A673 (cell line): ENCODE measurements at regions of chr14 and their contacts with region 1.

Region 1: GRCh38 chr14:61252369-61253063 is 28.6 kb downstream of the TMEM30B start:
- DNase-seq: peak; percentile 93
- H3K4me3 ChIP-seq: no peak overlapping the region
- H3K27ac ChIP-seq: peak overlapping the region; percentile 26
- H3K4me1 ChIP-seq: peaks cover 14% of the 10 kb centered on the region
- H3K27me3 ChIP-seq: no peaks in the 10 kb centered on the region
- CTCF ChIP-seq: peak; percentile 95

Region 2: DNA sequence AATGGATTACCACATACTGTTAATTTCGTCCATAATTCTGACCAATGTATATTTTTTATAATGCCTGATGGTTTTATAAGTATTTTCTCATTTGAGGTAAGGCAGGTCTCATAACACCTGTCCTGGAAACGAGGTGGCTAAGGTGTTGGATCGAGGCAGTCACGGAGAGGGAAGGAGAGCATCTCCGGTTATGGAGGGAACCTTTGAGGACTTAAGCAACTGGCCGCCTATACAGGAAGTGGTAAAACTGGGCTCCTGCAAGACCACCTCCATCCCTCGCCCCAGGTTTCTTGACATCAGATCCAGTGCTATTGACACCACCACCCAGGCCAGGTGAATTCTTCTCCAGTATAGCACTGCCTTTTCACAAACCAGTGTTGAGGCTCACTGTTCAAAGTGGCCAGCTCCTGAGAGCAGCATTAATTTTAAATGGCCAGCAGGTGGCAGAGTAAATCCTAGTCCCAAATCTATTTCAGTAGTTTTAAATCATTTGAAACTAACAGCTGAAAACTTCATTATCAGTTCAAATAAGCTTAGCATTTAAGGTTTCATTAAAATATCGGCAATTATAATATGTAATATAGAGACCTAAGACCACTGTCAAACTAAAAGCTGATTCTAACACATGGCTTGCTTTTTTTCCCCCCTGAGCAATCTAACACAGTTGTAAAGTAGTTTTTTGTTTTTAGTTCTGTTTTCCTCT is 902.7 kb before region 1 on chr14:
- CTCF ChIA-PET with region 1: no interaction called
- POLR2A ChIA-PET with region 1: no interaction called
- intact Hi-C with region 1: loop called (anchors 10 kb)
- DNase-seq: peak; percentile 61
- H3K4me3 ChIP-seq: no peak overlapping the region
- H3K27ac ChIP-seq: no peak overlapping the region
- H3K4me1 ChIP-seq: no peaks in the 10 kb centered on the region
- H3K27me3 ChIP-seq: no peaks in the 10 kb centered on the region
- CTCF ChIP-seq: peak; percentile 78

Region 3: GRCh38 chr14:60724137-60724619 is 528.3 kb before region 1 on chr14 and contains the start of gene SIX4:
- CTCF ChIA-PET with region 1: no interaction called
- POLR2A ChIA-PET with region 1: no interaction called
- intact Hi-C with region 1: loop called (anchors 5 kb)
- DNase-seq: peak; percentile 84
- H3K4me3 ChIP-seq: peak within 1 kb of the TSS; percentile 84
- H3K27ac ChIP-seq: peak within 1 kb of the TSS; percentile 79
- H3K4me1 ChIP-seq: peaks cover 9% of the 10 kb centered on the region
- H3K27me3 ChIP-seq: no peaks in the 10 kb centered on the region
- CTCF ChIP-seq: no peak
- total RNA-seq, gene SIX4: 13.6 and 16.0 TPM in 2 replicates

Region 4: GRCh38 chr14:60980811-60981632 is 271.5 kb before region 1 on chr14 and contains the starts of genes SLC38A6 and TRMT5:
- CTCF ChIA-PET with region 1: no interaction called
- POLR2A ChIA-PET with region 1: no interaction called
- intact Hi-C with region 1: loop called (anchors 5 kb)
- DNase-seq: peak; percentile 97
- H3K4me3 ChIP-seq: peak within 1 kb of the TSS; percentile 84
- H3K27ac ChIP-seq: peak within 1 kb of the TSS; percentile 94
- H3K4me1 ChIP-seq: peaks cover 26% of the 10 kb centered on the region
- H3K27me3 ChIP-seq: no peaks in the 10 kb centered on the region
- CTCF ChIP-seq: no peak
- total RNA-seq, gene SLC38A6: 25.8 and 28.0 TPM in 2 replicates
- total RNA-seq, gene TRMT5: 21.9 and 26.2 TPM in 2 replicates

Region 5: GRCh38 chr14:61103481-61104339 is 148.8 kb before region 1 on chr14:
- CTCF ChIA-PET with region 1: no interaction called
- POLR2A ChIA-PET with region 1: no interaction called
- intact Hi-C with region 1: loop called (anchors 5 kb)
- DNase-seq: peak; percentile 98
- H3K4me3 ChIP-seq: no peak overlapping the region
- H3K27ac ChIP-seq: peak overlapping the region; percentile 96
- H3K4me1 ChIP-seq: peaks cover 74% of the 10 kb centered on the region
- H3K27me3 ChIP-seq: no peaks in the 10 kb centered on the region
- CTCF ChIP-seq: no peak

Region 6: DNA sequence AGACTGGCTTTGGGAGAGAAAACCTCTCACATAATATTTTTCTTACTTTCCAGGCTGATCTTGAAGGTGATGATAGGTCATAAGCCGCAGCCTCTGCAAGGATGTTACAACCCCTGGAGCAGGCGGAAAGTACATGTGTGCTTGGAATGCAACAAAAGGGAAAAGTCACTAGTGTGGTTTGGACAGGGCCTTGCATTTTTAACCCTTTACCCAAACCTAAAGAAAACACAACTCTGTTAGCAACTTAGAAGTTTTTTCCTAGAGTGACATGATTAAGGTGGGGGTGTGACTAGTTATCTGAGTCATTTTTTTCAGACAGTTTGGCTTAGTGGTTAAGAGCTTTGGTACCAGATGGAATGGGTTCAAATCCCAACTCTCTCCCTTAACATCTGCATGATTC is 68.4 kb before region 1 on chr14:
- CTCF ChIA-PET with region 1: interaction called, 3 read pairs
- POLR2A ChIA-PET with region 1: no interaction called
- intact Hi-C with region 1: loop called (anchors 1 kb)
- DNase-seq: peak; percentile 34
- H3K4me3 ChIP-seq: no peak overlapping the region
- H3K27ac ChIP-seq: peak overlapping the region; percentile 70
- H3K4me1 ChIP-seq: peaks cover 54% of the 10 kb centered on the region
- H3K27me3 ChIP-seq: no peaks in the 10 kb centered on the region
- CTCF ChIP-seq: no peak